ENCODE measurements at regions of chr13 and their contacts with region 1.

Region 1: DNA sequence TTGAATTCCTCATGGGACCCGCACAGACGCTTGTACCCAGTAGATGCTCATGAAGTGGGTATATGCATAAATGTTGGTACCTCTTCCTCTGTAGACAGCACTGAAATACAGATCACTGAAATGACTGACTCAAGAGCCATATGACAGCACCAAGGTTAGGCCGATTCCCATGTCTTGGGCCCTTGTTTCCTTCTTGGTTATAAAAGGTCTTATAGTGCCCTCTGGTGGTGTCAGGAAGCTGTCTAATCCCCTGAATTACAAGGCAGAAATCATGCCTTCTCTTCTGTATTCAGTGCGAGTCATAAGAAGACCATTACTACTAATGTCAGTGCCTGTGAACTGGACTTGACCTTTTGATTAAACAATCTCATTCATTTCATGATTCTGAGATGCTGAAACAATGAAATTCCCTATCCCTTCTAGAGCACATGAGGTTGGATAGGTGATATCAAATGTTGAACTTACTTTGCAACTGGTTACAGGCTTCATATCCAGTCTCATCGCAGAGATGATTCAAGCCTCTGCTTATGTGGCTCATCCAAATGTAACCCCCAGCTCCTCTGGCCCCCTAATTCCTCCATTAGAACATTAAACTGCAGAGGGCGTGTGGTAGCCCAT is 59.7 kb downstream of the SPATA13 start:
- DNase-seq: peak in 1 of 2 donors; percentile 89
- ATAC-seq: peak; percentile 78 to 81 (median 79)
- H3K4me3 ChIP-seq: no peak overlapping the region
- H3K4me3 Mint-ChIP-seq: no peak overlapping the region
- H3K27ac ChIP-seq: no peak overlapping the region
- H3K27ac Mint-ChIP-seq: no peak overlapping the region
- H3K4me1 ChIP-seq: peaks cover 31% of the 10 kb centered on the region
- H3K4me1 Mint-ChIP-seq: peaks cover 30 to 48% of the 10 kb centered on the region in 2 donors
- H3K27me3 ChIP-seq: no peaks in the 10 kb centered on the region
- H3K27me3 Mint-ChIP-seq: no peaks in the 10 kb centered on the region
- CTCF ChIP-seq: peak; percentile 80

Region 2: GRCh38 chr13:23466144-23467002 is 753.8 kb before region 1 on chr13:
- intact Hi-C with region 1: loop called (anchors 2 kb)
- DNase-seq: peak; percentile 49 to 76
- ATAC-seq: peak; percentile 85 to 90 (median 87)
- H3K4me3 ChIP-seq: peak overlapping the region; percentile 44
- H3K4me3 Mint-ChIP-seq: peak overlapping the region; percentile 73
- H3K27ac ChIP-seq: peak overlapping the region; percentile 40
- H3K27ac Mint-ChIP-seq: peak overlapping the region; percentile 37 to 73
- H3K4me1 ChIP-seq: peaks cover 14% of the 10 kb centered on the region
- H3K4me1 Mint-ChIP-seq: peaks cover 10 to 13% of the 10 kb centered on the region in 2 donors
- H3K27me3 ChIP-seq: peaks cover 3% of the 10 kb centered on the region
- H3K27me3 Mint-ChIP-seq: peaks cover 10 to 14% of the 10 kb centered on the region in 2 donors
- CTCF ChIP-seq: peak; percentile 56

Region 3: DNA sequence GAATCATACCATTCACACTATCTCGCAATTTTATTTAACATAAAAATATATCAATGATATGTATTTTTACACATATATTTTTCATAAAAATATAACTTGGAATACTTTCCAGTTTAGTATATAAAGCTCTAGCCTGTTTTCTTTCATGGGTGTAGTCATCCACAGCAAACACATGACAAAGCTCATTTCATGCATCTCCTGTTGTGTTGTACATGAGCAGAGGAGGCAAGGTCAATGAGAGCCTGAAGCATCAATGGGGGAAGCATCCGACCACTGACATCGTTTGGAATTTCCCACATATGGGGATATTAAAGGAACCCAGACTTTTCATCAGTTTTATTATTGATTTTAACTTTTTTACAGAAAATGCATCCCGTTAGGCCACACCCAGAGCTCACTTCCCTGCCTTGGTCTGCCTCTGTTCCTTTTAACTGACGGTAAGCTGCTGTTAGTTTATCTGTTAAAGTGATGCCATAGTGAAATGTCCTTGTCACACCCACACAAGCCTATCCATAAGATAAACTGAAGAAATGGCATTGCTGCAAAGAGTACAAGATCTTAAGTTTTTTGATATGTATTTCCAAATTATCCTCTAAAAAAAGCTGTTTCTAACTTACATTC is 375.0 kb before region 1 on chr13:
- intact Hi-C with region 1: no loop called
- DNase-seq: no peak
- ATAC-seq: no peak
- H3K4me3 ChIP-seq: no peak overlapping the region
- H3K4me3 Mint-ChIP-seq: no peak overlapping the region
- H3K27ac ChIP-seq: no peak overlapping the region
- H3K27ac Mint-ChIP-seq: no peak overlapping the region
- H3K4me1 ChIP-seq: no peaks in the 10 kb centered on the region
- H3K4me1 Mint-ChIP-seq: peaks cover 0 to 29% of the 10 kb centered on the region in 2 donors
- H3K27me3 ChIP-seq: no peaks in the 10 kb centered on the region
- H3K27me3 Mint-ChIP-seq: no peaks in the 10 kb centered on the region
- CTCF ChIP-seq: no peak

Region 4: DNA sequence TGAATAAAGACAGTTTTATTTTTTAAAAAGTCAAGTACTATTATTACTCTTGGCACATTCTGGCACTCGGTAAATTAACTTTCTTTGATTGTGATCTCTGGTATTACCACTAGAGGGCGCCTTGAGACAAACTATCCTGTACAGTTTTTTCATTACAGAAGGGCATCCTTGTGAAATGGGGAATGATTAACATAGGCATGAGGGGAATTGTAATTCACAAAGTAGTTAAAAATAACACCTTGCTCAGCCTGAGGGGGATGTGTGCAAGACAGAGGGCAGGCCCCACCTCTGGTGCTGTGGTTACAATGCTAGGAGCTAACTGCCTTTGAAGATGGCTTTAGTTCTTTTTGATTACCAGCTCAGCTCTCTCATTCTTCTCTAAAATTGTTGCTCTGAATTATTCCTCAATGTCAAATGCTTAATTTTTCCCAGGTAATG is 298.7 kb before region 1 on chr13:
- intact Hi-C with region 1: loop called (anchors 1 kb)
- DNase-seq: peak in 1 of 2 donors; percentile 58
- ATAC-seq: peak; percentile 47 to 52 (median 50)
- H3K4me3 ChIP-seq: no peak overlapping the region
- H3K4me3 Mint-ChIP-seq: no peak overlapping the region
- H3K27ac ChIP-seq: no peak overlapping the region
- H3K27ac Mint-ChIP-seq: no peak overlapping the region
- H3K4me1 ChIP-seq: no peaks in the 10 kb centered on the region
- H3K4me1 Mint-ChIP-seq: no peaks in the 10 kb centered on the region
- H3K27me3 ChIP-seq: peaks cover 4% of the 10 kb centered on the region
- H3K27me3 Mint-ChIP-seq: peaks cover 17 to 57% of the 10 kb centered on the region in 2 donors
- CTCF ChIP-seq: peak; percentile 79

Region 5: DNA sequence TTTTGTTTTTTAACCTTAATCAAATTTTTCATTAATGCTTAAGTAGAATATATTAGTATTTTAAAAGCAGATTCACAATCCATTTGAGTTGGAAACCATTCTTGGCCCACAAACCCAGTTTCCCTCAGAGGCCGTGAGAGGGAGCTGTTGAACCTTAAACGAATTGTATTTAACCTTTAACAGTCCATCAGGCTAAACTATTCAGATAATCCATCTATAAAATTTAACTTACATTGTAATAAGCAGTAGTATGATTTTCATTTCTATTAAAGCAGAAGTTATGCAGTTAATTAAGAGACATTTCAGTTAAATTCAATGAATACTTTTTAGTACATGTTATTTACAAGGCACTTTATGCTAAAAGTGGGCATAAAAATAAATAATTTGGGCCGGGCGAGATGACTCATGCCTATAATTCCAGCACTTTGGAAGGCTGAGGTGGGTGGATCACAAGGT is 199.8 kb before region 1 on chr13:
- intact Hi-C with region 1: loop called (anchors 1 kb)
- DNase-seq: peak in 1 of 2 donors; percentile 63
- ATAC-seq: peak in 1 of 3 donors; percentile 54
- H3K4me3 ChIP-seq: no peak overlapping the region
- H3K4me3 Mint-ChIP-seq: no peak overlapping the region
- H3K27ac ChIP-seq: no peak overlapping the region
- H3K27ac Mint-ChIP-seq: no peak overlapping the region
- H3K4me1 ChIP-seq: no peaks in the 10 kb centered on the region
- H3K4me1 Mint-ChIP-seq: no peaks in the 10 kb centered on the region
- H3K27me3 ChIP-seq: no peaks in the 10 kb centered on the region
- H3K27me3 Mint-ChIP-seq: no peaks in the 10 kb centered on the region
- CTCF ChIP-seq: peak; percentile 41

Region 6: DNA sequence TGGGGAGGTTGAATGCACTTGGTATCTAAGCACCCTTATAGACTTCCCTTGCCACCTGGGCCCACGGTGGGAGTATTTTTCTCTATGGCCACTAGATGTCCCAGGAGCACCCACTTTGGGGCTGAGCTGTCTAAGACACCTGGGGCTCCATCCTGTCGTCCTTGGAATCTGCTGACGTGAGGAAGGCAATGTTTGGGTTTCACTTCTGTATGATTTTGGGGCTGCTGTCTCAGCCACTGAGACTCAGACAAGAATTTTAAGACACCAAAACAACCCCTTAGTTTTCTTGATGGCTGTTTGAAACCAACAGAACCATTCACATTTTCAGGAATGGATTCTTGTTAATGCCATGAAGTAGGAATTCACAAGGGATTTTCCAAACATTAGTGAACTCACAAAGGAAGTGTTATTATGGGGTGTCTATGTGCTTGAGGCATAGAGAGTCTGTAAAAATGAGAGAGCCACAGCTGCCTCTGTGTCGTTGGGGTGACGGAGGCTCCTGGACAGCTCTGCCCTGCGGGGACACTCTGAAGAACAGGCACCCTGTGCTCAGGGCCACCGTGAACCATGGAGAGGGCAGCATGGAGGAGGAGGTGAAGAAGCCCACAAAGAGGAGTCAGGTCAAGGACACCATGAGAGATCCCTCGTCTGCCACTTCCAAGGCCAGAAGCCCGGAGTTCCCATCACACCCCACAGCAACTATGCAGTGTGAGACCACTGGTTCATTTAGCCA is 166.5 kb before region 1 on chr13:
- intact Hi-C with region 1: loop called (anchors 1 kb)
- DNase-seq: peak; percentile 26 to 80
- ATAC-seq: peak; percentile 62 to 92 (median 85)
- H3K4me3 ChIP-seq: no peak overlapping the region
- H3K4me3 Mint-ChIP-seq: no peak overlapping the region
- H3K27ac ChIP-seq: no peak overlapping the region
- H3K27ac Mint-ChIP-seq: no peak overlapping the region
- H3K4me1 ChIP-seq: no peaks in the 10 kb centered on the region
- H3K4me1 Mint-ChIP-seq: no peaks in the 10 kb centered on the region
- H3K27me3 ChIP-seq: no peaks in the 10 kb centered on the region
- H3K27me3 Mint-ChIP-seq: peaks cover 9 to 26% of the 10 kb centered on the region in 2 donors
- CTCF ChIP-seq: peak; percentile 61

Region 7: GRCh38 chr13:24160454-24161009 is 59.7 kb before region 1 on chr13 and contains the start of gene SPATA13:
- intact Hi-C with region 1: loop called (anchors 5 kb)
- DNase-seq: peak; percentile 86 to 96
- ATAC-seq: peak; percentile 98
- H3K4me3 ChIP-seq: peak within 1 kb of the TSS; percentile 55
- H3K4me3 Mint-ChIP-seq: peak within 1 kb of the TSS; percentile 90
- H3K27ac ChIP-seq: no peak within 1 kb of the TSS
- H3K27ac Mint-ChIP-seq: peak within 1 kb of the TSS in 1 of 2 donors; percentile 72
- H3K4me1 ChIP-seq: peaks cover 24% of the 10 kb centered on the region
- H3K4me1 Mint-ChIP-seq: peaks cover 14 to 26% of the 10 kb centered on the region in 2 donors
- H3K27me3 ChIP-seq: peaks cover 7% of the 10 kb centered on the region
- H3K27me3 Mint-ChIP-seq: peaks cover 15 to 25% of the 10 kb centered on the region in 2 donors
- CTCF ChIP-seq: no peak
- total RNA-seq, gene SPATA13: 108 to 141 (median 141) TPM

Region 8: DNA sequence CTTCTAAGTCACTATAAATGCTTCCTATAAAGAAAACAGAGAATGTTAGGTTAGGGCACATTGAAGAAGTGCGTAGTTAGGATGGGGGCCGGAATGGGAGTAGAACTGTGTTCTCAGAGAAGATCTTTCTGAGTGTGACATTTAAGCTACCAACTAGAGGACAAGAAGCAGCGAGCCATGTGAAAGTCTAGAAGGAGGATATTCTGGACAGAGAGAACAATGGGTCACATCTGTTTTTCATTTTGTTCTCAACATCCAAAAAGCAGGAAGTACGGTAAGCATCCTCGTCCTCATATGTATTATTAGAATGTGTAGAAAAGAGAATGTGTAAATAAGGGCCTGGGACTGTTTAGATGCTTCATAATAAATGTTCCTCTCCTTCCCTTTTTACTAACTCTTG is 336.9 kb after region 1 on chr13:
- intact Hi-C with region 1: no loop called
- DNase-seq: no peak
- ATAC-seq: no peak
- H3K4me3 ChIP-seq: no peak overlapping the region
- H3K4me3 Mint-ChIP-seq: no peak overlapping the region
- H3K27ac ChIP-seq: no peak overlapping the region
- H3K27ac Mint-ChIP-seq: no peak overlapping the region
- H3K4me1 ChIP-seq: peaks cover 8% of the 10 kb centered on the region
- H3K4me1 Mint-ChIP-seq: peaks cover 11 to 13% of the 10 kb centered on the region in 2 donors
- H3K27me3 ChIP-seq: peaks cover 4% of the 10 kb centered on the region
- H3K27me3 Mint-ChIP-seq: peaks cover 40 to 55% of the 10 kb centered on the region in 2 donors
- CTCF ChIP-seq: no peak

Region 9: GRCh38 chr13:24709186-24709913 is 489.2 kb after region 1 on chr13:
- intact Hi-C with region 1: no loop called
- DNase-seq: peak; percentile 24 to 84
- ATAC-seq: peak; percentile 77 to 89 (median 89)
- H3K4me3 ChIP-seq: no peak overlapping the region
- H3K4me3 Mint-ChIP-seq: peak overlapping the region; percentile 56
- H3K27ac ChIP-seq: no peak overlapping the region
- H3K27ac Mint-ChIP-seq: peak overlapping the region in 1 of 2 donors; percentile 5
- H3K4me1 ChIP-seq: peaks cover 12% of the 10 kb centered on the region
- H3K4me1 Mint-ChIP-seq: peaks cover 11 to 13% of the 10 kb centered on the region in 2 donors
- H3K27me3 ChIP-seq: no peaks in the 10 kb centered on the region
- H3K27me3 Mint-ChIP-seq: peaks cover 0 to 11% of the 10 kb centered on the region in 2 donors
- CTCF ChIP-seq: no peak

Measured in natural killer cell (primary cell).